Activated CD4-positive, alpha-beta T cell treated with anti-CD3 and anti-CD28 coated beads, Interleukin-2, amount 10 ng/mL, durations not matched to agents 7 days and 5 days (primary cell): ENCODE measurements at regions of chr2 and their contacts with region 1.

Region 1: GRCh38 chr2:6835467-6835866 is 30.2 kb downstream of the CMPK2 start:
- DNase-seq: no peak
- H3K4me3 Mint-ChIP-seq: no peak overlapping the region
- H3K27ac Mint-ChIP-seq: no peak overlapping the region
- H3K4me1 Mint-ChIP-seq: peaks cover 36% of the 10 kb centered on the region
- H3K27me3 Mint-ChIP-seq: peaks cover 2% of the 10 kb centered on the region

Region 2: DNA sequence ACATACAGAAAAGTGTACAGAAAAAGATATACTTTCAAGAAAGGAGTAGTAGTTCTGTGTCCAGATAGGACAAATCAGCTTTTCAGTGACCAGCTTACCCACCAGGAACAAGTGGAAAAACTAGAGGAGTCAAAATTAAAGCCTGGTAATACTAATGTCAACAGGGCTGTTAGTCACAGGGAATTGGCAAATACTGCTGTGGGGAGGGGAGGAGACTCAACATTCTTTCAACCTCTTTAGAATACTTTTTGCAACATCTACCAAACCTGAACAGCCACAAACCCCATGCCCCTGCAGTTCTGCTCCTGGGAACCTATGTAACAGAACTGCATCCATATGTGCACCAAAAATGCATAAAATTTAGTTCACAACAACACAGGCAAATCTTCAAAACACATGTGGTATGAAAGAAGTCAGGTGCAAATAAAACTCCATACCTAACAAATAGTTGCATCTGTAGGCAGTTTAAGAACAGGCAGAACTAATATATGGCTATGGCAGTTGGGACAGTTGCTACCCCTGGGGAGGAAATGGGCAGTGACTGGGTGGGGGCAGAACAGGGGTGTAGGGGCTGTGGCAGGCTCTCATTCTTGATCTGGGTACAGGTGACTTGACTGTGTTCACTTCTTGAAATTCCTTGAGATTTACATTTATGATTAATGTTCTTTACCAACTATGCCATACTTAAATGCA is 20.5 kb after region 1 on chr2:
- CTCF ChIA-PET with region 1: no interaction called
- POLR2A ChIA-PET with region 1: interaction called, 10 read pairs
- DNase-seq: no peak
- H3K4me3 Mint-ChIP-seq: no peak overlapping the region
- H3K27ac Mint-ChIP-seq: peak overlapping the region; percentile 3
- H3K4me1 Mint-ChIP-seq: peaks cover 79% of the 10 kb centered on the region
- H3K27me3 Mint-ChIP-seq: no peaks in the 10 kb centered on the region